Prostate gland (tissue), 2 donors: ENCODE measurements at regions of chr11 and their contacts with region 1.

Region 1: GRCh38 chr11:20127671-20128527 is 32.4 kb downstream of the DBX1 start:
- DNase-seq: peak; percentile 57
- H3K4me3 ChIP-seq: no peak overlapping the region
- H3K27ac ChIP-seq: no peak overlapping the region
- H3K4me1 ChIP-seq: no peaks in the 10 kb centered on the region
- H3K27me3 ChIP-seq: no peaks in the 10 kb centered on the region
- CTCF ChIP-seq: peak; percentile 64 to 81 (median 75)
- POLR2A ChIP-seq: no peak

Region 2: DNA sequence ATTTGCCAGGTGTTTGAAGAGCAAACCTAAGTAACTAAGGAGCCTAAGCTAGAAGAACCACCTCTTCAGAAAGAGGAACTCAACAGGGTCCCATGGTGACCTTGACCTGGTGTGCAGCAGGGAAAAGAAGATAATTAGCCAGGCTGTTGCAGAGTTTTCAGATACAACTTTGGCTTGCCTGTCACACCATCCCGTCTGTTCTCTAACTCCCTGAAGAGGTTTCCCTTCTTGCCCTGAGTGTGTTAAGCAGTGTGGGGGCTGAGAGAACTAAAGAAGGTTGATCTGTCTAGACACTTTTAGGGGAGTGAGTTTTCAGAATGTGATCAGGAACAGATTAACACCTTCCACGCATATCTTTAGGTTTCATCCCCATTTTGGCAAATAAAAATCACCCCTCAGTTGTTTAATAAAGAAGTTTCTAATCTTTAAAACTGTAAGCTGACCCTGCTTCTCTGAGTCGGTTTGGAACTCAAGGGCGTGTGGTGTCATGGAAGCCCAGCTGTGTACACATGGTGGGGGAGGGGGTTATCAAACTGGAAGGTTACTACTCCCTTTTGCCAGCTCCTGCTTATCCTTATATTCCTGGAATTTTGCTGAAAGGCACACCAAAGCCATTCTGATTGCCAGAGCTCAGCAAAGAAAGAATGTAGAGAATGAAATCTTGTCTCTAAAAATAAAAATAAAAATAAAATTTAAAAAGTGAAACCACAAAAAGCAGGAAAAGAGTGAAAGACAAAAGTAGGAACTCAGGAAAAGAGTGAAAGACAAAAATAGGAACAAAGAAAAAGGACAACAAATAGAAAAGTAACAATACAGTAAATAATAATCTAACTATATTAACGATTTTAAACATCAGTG is 37.9 kb before region 1 on chr11:
- intact Hi-C with region 1: no loop called
- DNase-seq: no peak
- H3K4me3 ChIP-seq: no peak overlapping the region
- H3K27ac ChIP-seq: no peak overlapping the region
- H3K4me1 ChIP-seq: no peaks in the 10 kb centered on the region
- H3K27me3 ChIP-seq: no peaks in the 10 kb centered on the region
- CTCF ChIP-seq: no peak
- POLR2A ChIP-seq: no peak

Region 3: DNA sequence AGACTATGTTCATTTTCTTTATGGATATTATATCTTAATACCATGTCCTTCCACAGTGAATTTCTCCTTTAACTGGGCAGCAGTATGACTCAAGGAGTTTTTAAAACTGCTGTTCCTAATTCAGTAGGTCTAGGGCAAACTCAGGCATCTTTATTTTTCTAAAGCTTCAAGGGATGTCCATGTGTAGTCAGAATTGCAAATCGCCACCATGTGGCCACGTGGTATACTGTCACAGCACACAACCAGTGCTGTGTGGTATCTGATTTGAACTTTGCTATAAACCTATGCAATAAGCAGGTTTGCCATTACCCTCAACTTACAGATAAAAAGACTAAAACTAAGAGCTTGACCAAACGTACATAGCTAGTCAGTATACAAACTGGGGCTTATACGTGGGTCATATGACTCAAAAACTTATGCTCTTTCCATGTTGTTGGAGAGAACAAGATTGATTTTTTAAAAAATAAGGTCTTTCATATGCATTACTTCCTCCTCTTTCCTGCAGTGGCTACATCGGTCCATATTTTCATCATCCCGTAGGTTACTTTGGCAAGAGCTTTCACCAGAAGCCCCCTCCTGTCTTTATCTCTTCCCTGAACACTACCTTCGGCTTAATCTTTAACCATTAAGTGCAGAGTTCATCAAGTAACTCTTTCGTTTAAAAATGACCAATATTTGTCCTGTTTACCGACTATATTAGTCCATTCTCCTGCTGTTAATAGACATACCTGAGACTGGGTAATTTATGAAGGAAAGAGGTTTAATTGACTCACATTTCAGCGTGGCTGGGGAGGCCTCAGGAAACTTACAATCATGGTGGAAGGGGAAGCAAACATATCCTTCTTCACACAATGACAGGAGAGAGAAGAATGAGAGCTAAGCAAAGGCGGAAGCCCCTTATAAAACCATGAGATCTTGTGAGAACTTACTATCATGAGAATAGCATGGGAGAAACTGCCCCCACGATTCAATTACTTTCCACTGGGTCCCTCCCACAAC is 227.6 kb after region 1 on chr11:
- intact Hi-C with region 1: loop called (anchors 5 kb)
- DNase-seq: no peak
- H3K4me3 ChIP-seq: no peak overlapping the region
- H3K27ac ChIP-seq: no peak overlapping the region
- H3K4me1 ChIP-seq: no peaks in the 10 kb centered on the region
- H3K27me3 ChIP-seq: no peaks in the 10 kb centered on the region
- CTCF ChIP-seq: peak in 2 of 4 experiments; percentile 29 to 39
- POLR2A ChIP-seq: no peak

Region 4: DNA sequence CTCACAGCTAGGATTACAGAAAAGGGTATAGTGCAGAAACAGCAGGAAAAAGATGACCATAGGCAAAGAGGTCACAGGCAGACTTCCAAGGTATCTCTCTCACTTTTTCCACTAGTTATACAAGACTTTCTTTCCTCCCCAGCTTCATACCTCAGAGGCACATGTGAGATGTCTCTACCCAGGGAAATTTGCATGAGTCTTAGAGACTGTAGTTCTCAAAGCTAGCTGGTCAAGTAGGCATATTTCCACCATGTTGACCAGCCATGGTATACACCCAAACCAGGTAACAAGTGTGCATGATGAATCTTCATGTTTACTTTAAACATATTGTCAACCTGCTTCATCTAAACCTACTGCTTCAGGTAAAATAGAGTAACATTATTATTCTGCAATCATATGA is 287.5 kb after region 1 on chr11:
- intact Hi-C with region 1: no loop called
- DNase-seq: no peak
- H3K4me3 ChIP-seq: no peak overlapping the region
- H3K27ac ChIP-seq: no peak overlapping the region
- H3K4me1 ChIP-seq: no peaks in the 10 kb centered on the region
- H3K27me3 ChIP-seq: no peaks in the 10 kb centered on the region
- CTCF ChIP-seq: no peak
- POLR2A ChIP-seq: no peak